Activated CD8-positive, alpha-beta T cell treated with anti-CD3 and anti-CD28 coated beads, Interleukin-2, amount 10 ng/mL, durations not matched to agents 7 days and 5 days (primary cell): ENCODE measurements at regions of chr14 and their contacts with region 1.

Region 1: GRCh38 chr14:50003213-50004031 is 110.5 kb downstream of the ARF6 start:
- DNase-seq: peak; percentile 89
- ATAC-seq: peak; percentile 46
- H3K4me3 Mint-ChIP-seq: peak overlapping the region; percentile 76
- H3K27ac Mint-ChIP-seq: peak overlapping the region; percentile 96
- H3K4me1 Mint-ChIP-seq: peaks cover 74% of the 10 kb centered on the region
- H3K27me3 Mint-ChIP-seq: no peaks in the 10 kb centered on the region

Region 2: DNA sequence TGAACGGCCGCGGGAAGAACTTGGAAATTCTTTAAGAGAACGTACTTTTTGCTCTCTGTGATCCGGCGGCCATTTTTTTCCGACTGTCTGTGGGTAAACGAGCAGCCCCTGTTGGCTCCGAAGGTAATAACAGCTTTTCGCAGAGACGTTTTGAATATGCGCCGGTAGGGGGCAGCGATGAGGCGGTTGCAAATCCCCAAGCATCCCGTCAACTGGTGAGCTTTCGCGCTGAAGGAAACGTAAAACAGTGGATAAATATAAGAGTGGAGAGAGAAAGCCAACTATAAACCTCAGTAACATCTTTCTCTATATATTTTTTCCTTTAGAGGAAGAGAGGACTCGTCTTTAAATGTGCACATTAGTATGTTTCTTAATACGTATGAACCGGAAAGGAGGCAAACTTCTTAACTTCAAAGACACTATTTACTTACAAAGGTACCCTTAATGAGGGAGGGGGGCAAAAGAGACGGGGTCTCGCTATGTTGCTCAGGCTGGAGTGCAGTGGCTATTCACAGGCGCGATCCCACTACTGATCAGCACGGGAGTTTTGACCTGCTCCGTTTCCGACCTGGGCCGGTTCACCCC is 141.2 kb before region 1 on chr14:
- CTCF ChIA-PET with region 1: interaction called, 89 read pairs
- POLR2A ChIA-PET with region 1: interaction called, 168 read pairs
- DNase-seq: peak; percentile 92
- ATAC-seq: no peak
- H3K4me3 Mint-ChIP-seq: no peak overlapping the region
- H3K27ac Mint-ChIP-seq: no peak overlapping the region
- H3K4me1 Mint-ChIP-seq: peaks cover 26% of the 10 kb centered on the region
- H3K27me3 Mint-ChIP-seq: no peaks in the 10 kb centered on the region

Region 3: GRCh38 chr14:49892636-49893308 is 110.7 kb before region 1 on chr14 and contains the start of gene ARF6:
- CTCF ChIA-PET with region 1: interaction called, 15 read pairs
- POLR2A ChIA-PET with region 1: interaction called, 89 read pairs
- DNase-seq: peak; percentile 98
- ATAC-seq: peak; percentile 89
- H3K4me3 Mint-ChIP-seq: peak within 1 kb of the TSS; percentile 90
- H3K27ac Mint-ChIP-seq: peak within 1 kb of the TSS; percentile 97
- H3K4me1 Mint-ChIP-seq: peaks cover 17% of the 10 kb centered on the region
- H3K27me3 Mint-ChIP-seq: no peaks in the 10 kb centered on the region
- total RNA-seq, gene ARF6: 183 to 193 TPM

Region 4: GRCh38 chr14:49946320-49947141 is 56.9 kb before region 1 on chr14:
- CTCF ChIA-PET with region 1: interaction called, 10 read pairs
- POLR2A ChIA-PET with region 1: interaction called, 25 read pairs
- DNase-seq: peak; percentile 37
- ATAC-seq: peak; percentile 52
- H3K4me3 Mint-ChIP-seq: peak overlapping the region; percentile 44
- H3K27ac Mint-ChIP-seq: peak overlapping the region; percentile 93
- H3K4me1 Mint-ChIP-seq: peaks cover 82% of the 10 kb centered on the region
- H3K27me3 Mint-ChIP-seq: no peaks in the 10 kb centered on the region

Region 5: GRCh38 chr14:49986340-49987014 is 16.9 kb before region 1 on chr14:
- CTCF ChIA-PET with region 1: interaction called, 12 read pairs
- POLR2A ChIA-PET with region 1: interaction called, 40 read pairs
- DNase-seq: no peak
- ATAC-seq: no peak
- H3K4me3 Mint-ChIP-seq: no peak overlapping the region
- H3K27ac Mint-ChIP-seq: no peak overlapping the region
- H3K4me1 Mint-ChIP-seq: peaks cover 22% of the 10 kb centered on the region
- H3K27me3 Mint-ChIP-seq: no peaks in the 10 kb centered on the region

Region 6: GRCh38 chr14:50038398-50039119 is 35.1 kb after region 1 on chr14:
- CTCF ChIA-PET with region 1: interaction called, 11 read pairs
- POLR2A ChIA-PET with region 1: interaction called, 95 read pairs
- DNase-seq: peak; percentile 44
- ATAC-seq: peak; percentile 22
- H3K4me3 Mint-ChIP-seq: peak overlapping the region; percentile 74
- H3K27ac Mint-ChIP-seq: peak overlapping the region; percentile 98
- H3K4me1 Mint-ChIP-seq: peaks cover 85% of the 10 kb centered on the region
- H3K27me3 Mint-ChIP-seq: no peaks in the 10 kb centered on the region

Region 7: DNA sequence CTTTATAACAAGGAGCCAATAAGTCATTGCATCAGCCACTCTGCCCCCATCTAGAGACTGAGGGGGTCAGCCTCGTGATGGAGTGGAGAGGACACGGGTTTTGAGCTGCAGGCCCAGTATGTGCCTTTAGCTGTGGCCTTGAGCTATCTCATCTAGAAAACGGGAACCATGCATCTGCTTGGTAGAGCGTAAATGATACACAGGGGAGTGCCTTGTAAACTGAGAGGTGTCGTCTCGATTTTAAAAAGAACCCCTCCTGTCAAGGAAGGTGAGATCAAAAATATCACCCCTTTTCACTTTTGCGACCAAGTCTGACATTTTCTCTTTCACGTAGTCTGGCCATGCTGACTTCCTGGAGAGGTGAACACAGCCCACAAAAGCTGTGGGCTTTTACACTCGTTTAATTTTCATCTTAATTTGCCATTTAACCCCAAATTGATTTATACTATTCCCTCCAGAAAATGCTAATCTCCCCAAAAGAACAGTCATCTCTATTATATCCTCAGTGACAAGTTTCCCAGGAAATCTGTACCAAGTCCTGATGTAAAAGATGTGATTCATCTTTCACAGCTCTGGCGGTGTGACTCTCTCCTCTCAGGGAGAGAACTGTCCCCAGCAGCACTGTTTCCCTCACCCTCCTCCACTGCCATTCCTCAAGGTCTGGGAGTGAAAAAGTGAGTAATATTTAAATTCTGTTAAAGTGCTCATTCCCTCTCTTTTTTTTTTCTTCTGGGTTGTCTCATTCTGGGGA is 82.3 kb after region 1 on chr14:
- CTCF ChIA-PET with region 1: interaction called, 21 read pairs
- POLR2A ChIA-PET with region 1: interaction called, 91 read pairs
- DNase-seq: peak; percentile 42
- ATAC-seq: no peak
- H3K4me3 Mint-ChIP-seq: peak overlapping the region; percentile 68
- H3K27ac Mint-ChIP-seq: peak overlapping the region; percentile 96
- H3K4me1 Mint-ChIP-seq: peaks cover 95% of the 10 kb centered on the region
- H3K27me3 Mint-ChIP-seq: no peaks in the 10 kb centered on the region